Right lobe of liver (tissue), 6 donors: ENCODE measurements at regions of chr1 and their contacts with region 1.

Region 1: GRCh38 chr1:162056043-162056442 is 13.4 kb upstream of the NOS1AP start:
- DNase-seq: peak; percentile 49 to 73 (median 59)
- ATAC-seq: peak; percentile 98 to 99 (median 98)
- H3K4me3 ChIP-seq: no peak overlapping the region
- H3K27ac ChIP-seq: no peak overlapping the region
- H3K4me1 ChIP-seq: peaks cover 0 to 6% (median 2%) of the 10 kb centered on the region in 4 donors
- H3K27me3 ChIP-seq: no peaks in the 10 kb centered on the region
- CTCF ChIP-seq: peak; percentile 84 to 94 (median 90)
- POLR2A ChIP-seq: no peak

Region 2: DNA sequence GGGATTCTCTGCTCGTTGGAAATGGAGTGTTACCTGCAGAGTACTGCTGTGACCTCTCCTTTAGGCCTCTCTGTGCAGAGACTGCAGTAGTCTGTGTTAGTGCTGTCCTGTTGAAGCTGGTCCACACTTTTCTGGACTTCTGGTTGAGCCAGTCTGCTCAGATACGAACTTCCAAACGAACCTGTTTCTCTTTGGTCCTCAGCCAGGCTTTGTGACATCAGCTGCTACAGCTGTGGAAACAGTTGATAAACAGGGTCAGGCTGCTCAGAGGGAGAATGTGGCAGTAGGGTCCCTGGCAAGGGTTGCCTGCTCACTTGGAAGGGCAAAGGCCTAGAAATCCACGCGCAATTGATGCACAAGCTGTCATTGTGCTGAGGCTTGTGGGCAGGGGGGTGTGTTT is 112.2 kb after region 1 on chr1:
- intact Hi-C with region 1: no loop called
- DNase-seq: peak in 2 of 3 donors; percentile 56 to 63
- ATAC-seq: peak; percentile 66 to 84 (median 78)
- H3K4me3 ChIP-seq: no peak overlapping the region
- H3K27ac ChIP-seq: peak overlapping the region in 1 of 3 donors; percentile 42
- H3K4me1 ChIP-seq: peaks cover 0 to 29% (median 4%) of the 10 kb centered on the region in 4 donors
- H3K27me3 ChIP-seq: no peaks in the 10 kb centered on the region
- CTCF ChIP-seq: no peak
- POLR2A ChIP-seq: no peak

Region 3: GRCh38 chr1:162276493-162276892 is 220.4 kb after region 1 on chr1:
- intact Hi-C with region 1: loop called (anchors 5 to 10 kb)
- DNase-seq: no peak
- ATAC-seq: peak; percentile 71 to 89 (median 83)
- H3K4me3 ChIP-seq: no peak overlapping the region
- H3K27ac ChIP-seq: no peak overlapping the region
- H3K4me1 ChIP-seq: no peaks in the 10 kb centered on the region
- H3K27me3 ChIP-seq: no peaks in the 10 kb centered on the region
- CTCF ChIP-seq: peak; percentile 39 to 53 (median 44)
- POLR2A ChIP-seq: no peak

Region 4: DNA sequence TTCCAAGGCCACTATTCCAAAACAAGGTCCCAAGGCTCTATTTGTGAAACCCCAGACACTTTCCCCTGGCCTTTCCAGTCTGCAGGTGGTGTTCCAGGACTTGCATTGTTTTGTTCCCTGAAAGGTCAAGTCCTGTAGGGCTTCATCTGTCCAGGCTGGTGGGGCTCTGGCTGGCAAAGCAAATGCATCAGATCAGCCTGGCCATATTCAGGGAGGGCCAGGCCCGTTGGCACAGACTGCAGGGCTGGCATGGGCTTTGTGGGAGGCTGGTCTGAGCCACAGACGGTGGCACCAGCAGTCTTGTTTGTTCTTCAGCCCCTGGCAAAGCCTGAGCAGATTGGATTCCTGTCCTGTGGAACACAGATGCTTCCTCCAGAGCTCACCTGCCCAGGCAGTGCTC is 227.6 kb after region 1 on chr1:
- intact Hi-C with region 1: loop called (anchors 5 to 10 kb)
- DNase-seq: peak; percentile 32 to 78 (median 71)
- ATAC-seq: peak; percentile 57 to 85 (median 82)
- H3K4me3 ChIP-seq: no peak overlapping the region
- H3K27ac ChIP-seq: peak overlapping the region in 2 of 3 donors; percentile 22 to 39
- H3K4me1 ChIP-seq: peaks cover 0 to 30% (median 11%) of the 10 kb centered on the region in 4 donors
- H3K27me3 ChIP-seq: no peaks in the 10 kb centered on the region
- CTCF ChIP-seq: no peak
- POLR2A ChIP-seq: no peak

Region 5: DNA sequence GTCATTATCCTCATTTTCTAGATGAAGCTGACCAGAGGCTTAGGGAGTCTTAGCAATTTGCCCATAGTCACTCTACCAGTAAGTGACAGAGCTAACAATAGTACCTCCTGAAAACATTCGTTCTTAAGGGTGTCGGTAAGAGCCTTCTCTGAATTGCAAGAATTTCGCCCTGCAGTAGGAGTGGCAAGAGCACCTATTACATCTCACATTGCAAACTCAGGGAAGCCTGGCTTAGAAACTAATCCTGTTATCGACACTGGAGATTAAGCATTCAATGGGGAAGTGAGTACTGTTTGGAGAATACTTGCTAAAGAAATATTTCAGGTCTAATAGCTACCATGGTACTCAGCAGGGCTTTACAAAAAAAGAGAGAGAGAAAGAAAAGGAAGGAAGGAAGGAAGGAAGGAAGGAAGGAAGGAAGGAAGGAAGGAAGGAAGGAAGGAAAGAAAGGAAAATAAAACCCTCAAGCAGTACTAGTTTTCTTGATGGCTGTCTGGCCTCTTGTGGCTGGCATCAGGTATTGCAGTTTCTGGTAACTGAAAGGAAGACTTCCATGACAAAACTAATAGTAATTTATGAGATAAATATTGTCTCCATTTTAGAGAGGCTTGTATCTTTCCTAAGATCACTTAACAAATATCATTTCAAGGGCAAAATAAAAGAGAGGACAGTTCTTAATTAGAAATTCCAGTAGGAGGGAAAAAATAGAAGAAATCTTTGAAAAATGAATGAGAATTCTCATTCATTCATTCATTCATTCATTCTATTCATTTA is 335.9 kb after region 1 on chr1:
- intact Hi-C with region 1: loop called (anchors 5 to 10 kb)
- DNase-seq: peak in 1 of 3 donors; percentile 50
- ATAC-seq: peak in 3 of 4 donors; percentile 27 to 35 (median 28)
- H3K4me3 ChIP-seq: no peak overlapping the region
- H3K27ac ChIP-seq: no peak overlapping the region
- H3K4me1 ChIP-seq: peaks cover 0 to 18% (median 3%) of the 10 kb centered on the region in 4 donors
- H3K27me3 ChIP-seq: no peaks in the 10 kb centered on the region
- CTCF ChIP-seq: peak; percentile 73 to 87 (median 78)
- POLR2A ChIP-seq: no peak